ENCODE measurements at regions of chr9 and their contacts with region 1.

Region 1: DNA sequence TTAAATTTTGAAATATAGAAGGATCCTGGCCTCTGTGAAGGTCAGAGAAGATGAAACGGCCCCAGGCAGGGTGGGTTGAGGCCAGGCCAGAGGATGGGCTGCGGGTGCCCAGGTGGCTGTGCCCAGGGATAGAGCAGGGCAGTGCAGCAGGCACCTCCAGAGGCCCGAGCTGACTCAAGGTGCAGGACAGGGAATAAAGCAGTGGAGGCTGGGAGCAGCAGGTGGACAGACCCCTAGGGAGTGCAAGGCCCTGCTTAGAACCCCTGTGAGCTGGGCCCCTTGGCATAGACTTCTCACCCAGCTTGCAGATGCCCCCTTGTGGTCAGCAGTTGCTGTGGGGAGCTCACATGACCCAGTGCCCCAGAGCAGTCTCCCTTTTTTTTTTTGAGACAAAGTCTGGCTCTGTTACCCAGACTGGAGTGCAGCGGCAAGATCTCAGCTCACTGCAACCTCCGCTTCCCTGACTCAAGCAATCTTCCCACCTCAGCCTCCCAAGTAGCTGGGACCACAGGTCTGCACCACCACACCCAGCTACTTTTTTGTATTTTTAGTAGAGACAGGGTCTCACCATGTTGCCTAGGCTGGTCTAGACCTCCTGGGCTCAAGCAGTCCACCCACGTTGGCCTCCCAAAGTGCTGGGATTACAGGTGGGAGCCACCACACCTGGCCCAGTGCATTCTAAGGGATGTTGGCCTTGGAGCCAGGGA is 118.8 kb downstream of the WNK2 start:
- DNase-seq: peak; percentile 75

Region 2: GRCh38 chr9:93108291-93109041 is 194.2 kb before region 1 on chr9:
- intact Hi-C with region 1: loop called (anchors 5 kb)
- DNase-seq: peak; percentile 63

Region 3: GRCh38 chr9:93159601-93160471 is 142.9 kb before region 1 on chr9:
- intact Hi-C with region 1: loop called (anchors 2 kb)
- DNase-seq: peak; percentile 95

Region 4: DNA sequence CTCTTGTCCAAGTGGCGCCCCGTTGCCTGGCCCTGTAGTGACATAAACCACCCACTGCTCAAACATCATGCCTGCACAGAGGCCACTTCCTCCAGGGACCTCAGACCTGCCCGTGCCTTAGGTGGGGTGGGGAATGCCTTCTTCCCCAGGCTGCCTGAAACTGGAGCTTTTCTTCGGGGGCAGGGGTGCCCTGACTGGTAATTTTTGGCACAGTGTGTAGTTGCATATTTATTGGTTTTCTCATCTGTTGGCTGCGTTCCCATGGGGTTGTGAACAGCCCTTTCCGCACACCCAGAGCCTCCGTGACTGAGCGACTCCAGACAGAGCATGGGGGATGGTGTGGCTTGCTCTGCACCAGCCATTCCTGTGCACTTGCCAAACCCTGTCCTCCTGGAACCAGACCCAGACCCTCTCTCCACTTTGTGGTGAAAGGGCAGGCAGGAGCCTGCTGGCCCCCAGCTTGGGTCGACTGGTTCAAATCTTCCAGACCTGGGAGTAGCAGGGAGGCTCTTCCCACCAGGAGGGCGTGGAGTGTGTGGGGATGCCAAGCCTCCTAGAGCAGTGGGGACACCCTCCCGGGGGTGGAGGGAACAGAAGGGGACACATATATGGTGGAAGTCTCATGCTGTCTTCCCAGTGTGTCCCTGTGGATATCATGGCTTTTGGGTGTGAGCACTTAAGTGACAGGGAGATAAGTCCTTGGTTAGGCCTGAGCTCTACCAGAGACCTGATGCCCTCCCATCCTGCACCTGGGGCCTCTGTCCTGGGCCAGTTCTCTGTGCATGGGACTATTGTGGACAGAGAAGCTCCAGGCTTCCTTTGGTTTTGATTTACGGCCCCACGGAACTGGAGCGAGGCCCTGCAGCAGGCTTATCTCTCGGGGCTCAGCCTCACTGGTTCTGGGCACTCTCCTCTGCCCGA is 79.2 kb before region 1 on chr9:
- intact Hi-C with region 1: no loop called
- DNase-seq: no peak

Region 5: DNA sequence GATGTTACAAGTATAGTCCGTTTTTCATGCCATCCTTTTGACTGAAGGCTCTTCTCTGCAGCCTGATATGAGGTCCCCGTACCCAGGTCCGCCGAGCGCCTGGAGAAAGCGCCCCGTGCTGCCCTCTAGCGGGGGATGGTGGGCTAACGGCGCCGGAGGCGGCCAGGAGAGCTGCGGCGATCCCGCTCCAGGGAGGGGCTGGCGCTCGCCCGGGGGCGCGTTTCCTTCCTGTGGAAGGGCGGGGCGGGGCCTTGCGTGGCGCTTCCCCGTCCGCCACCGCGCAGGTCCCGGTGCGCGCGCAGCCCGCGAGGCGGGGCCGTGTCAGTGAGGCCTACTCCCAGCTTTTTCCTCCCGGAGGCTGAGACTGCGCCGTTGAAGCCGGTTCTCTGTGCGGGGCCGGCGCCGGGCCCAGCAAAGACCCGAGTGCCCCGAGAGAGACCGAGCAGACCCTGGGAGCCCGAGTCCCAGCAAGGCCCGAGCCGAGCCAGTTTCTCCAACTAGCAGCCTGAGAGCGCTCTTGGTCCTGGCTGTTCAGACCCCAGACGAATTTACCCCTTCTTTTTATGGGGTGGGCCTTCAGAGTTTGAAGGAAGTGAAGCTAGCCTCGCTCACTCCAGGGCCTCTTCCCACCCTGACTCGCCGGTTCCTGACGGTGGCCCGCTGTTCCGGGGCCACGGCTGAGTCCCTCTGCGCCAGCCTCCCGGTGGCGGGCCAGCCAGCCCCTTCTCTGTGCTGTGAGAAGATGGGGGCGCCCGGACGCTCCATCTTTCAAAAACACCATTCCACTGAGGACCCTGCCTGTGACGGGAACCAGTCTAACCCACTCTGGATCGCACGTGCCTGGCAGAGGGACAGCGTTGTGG is 263.9 kb after region 1 on chr9:
- intact Hi-C with region 1: loop called (anchors 10 kb)
- DNase-seq: peak; percentile 99